ENCODE measurements at regions of chr21 and their contacts with region 1.

Region 1: DNA sequence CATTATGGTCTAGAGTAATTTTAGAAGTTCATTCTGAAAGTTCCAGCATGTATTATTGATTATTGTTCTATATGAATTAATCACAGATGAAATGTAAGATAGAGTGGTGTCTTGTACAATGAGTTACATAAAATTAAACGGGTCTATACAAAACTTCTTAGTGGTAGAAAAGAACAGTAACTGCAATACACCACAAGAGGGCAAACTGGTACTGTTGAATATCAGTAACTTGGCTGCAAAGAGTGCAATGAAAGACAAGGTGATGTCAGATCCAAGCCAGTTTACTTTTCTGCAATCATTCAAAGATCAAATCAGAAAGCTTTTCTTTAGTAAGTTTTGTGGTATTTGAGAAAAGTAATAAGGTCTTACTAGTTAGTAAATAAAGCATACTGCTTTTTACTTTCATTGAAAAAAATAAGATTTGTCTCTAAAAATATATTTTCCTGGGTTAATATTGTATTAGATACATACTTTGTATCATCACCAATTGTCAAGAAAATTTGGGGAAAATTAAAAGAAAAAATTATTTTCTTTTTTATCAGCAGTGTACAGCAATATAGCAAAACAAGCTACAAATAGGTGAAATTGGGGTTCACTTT is 66.4 kb upstream of the BTG3 start:
- DNase-seq: peak; percentile 75
- H3K4me3 ChIP-seq: no peak overlapping the region
- H3K27ac ChIP-seq: no peak overlapping the region
- H3K4me1 ChIP-seq: no peaks in the 10 kb centered on the region
- CTCF ChIP-seq: peak; percentile 94

Region 2: DNA sequence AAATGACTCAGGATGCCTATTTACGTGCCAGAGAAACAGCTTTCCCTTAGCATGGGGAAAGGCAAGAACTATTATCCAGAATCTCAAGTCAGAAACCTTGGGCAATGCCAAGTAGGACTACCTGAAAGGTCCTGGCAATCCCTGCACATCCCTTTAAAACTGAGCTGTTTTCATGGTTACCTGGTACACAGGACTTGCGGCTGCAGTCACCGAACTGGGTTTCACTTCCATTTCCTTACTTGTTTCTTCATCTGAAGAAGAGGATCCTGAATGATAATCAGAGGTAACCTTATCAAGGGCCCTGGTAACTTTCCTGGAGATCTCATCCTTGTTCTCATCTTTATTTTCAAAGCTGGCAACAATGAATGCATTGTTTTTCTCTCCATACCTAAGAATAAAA is 80.7 kb before region 1 on chr21:
- CTCF ChIA-PET with region 1: no interaction called
- POLR2A ChIA-PET with region 1: no interaction called
- intact Hi-C with region 1: no loop called
- DNase-seq: peak; percentile 14
- H3K4me3 ChIP-seq: no peak overlapping the region
- H3K27ac ChIP-seq: no peak overlapping the region
- H3K4me1 ChIP-seq: peaks cover 11% of the 10 kb centered on the region
- CTCF ChIP-seq: no peak

Region 3: GRCh38 chr21:17903029-17903806 is 224.1 kb after region 1 on chr21:
- CTCF ChIA-PET with region 1: interaction called, 5 read pairs
- POLR2A ChIA-PET with region 1: interaction called, 3 read pairs
- intact Hi-C with region 1: loop called (anchors 1 kb)
- DNase-seq: peak; percentile 74
- H3K4me3 ChIP-seq: no peak overlapping the region
- H3K27ac ChIP-seq: no peak overlapping the region
- H3K4me1 ChIP-seq: no peaks in the 10 kb centered on the region
- CTCF ChIP-seq: peak; percentile 74

Region 4: GRCh38 chr21:17925000-17925610 is 246.0 kb after region 1 on chr21:
- CTCF ChIA-PET with region 1: no interaction called
- POLR2A ChIA-PET with region 1: interaction called, 4 read pairs
- intact Hi-C with region 1: loop called (anchors 1 kb)
- DNase-seq: peak; percentile 76
- H3K4me3 ChIP-seq: no peak overlapping the region
- H3K27ac ChIP-seq: no peak overlapping the region
- H3K4me1 ChIP-seq: no peaks in the 10 kb centered on the region
- CTCF ChIP-seq: peak; percentile 94

Region 5: DNA sequence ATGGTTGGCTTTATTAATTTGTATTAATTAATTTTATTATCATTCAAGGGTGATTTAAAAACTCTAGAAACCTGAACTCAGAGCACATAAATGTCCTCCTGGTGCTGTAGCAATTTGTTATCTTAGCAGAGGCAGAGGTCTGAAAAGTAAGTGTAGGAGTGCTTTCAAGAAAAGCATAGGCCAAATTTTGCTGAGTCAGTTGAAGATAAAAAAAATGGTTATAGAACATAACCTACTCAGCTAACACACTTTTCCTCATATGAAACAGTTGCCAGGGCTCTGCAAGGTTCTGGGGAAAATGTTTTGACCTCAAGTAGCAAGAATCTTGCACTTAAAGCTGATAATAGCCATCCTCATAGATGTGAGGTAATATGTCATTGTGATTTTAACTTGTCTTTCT is 512.0 kb after region 1 on chr21:
- CTCF ChIA-PET with region 1: no interaction called
- POLR2A ChIA-PET with region 1: no interaction called
- intact Hi-C with region 1: no loop called
- DNase-seq: no peak
- H3K4me3 ChIP-seq: no peak overlapping the region
- H3K27ac ChIP-seq: no peak overlapping the region
- H3K4me1 ChIP-seq: no peaks in the 10 kb centered on the region
- CTCF ChIP-seq: no peak

Measured in OCI-LY7 (cell line).